ENCODE measurements at regions of chr10 and their contacts with region 1.

Region 1: GRCh38 chr10:122112625-122113160 is 123.7 kb downstream of the TACC2 start:
- DNase-seq: peak; percentile 90 to 95
- ATAC-seq: peak; percentile 78 to 80
- H3K4me3 ChIP-seq: peak overlapping the region; percentile 69 to 82 (median 74)
- H3K27ac ChIP-seq: peak overlapping the region; percentile 95 to 99 (median 98)
- H3K4me1 ChIP-seq: peaks cover 49 to 52% of the 10 kb centered on the region in 2 donors
- H3K27me3 ChIP-seq: no peaks in the 10 kb centered on the region
- CTCF ChIP-seq: peak; percentile 39 to 79 (median 60)
- POLR2A ChIP-seq: peak; percentile 80 to 88

Region 2: DNA sequence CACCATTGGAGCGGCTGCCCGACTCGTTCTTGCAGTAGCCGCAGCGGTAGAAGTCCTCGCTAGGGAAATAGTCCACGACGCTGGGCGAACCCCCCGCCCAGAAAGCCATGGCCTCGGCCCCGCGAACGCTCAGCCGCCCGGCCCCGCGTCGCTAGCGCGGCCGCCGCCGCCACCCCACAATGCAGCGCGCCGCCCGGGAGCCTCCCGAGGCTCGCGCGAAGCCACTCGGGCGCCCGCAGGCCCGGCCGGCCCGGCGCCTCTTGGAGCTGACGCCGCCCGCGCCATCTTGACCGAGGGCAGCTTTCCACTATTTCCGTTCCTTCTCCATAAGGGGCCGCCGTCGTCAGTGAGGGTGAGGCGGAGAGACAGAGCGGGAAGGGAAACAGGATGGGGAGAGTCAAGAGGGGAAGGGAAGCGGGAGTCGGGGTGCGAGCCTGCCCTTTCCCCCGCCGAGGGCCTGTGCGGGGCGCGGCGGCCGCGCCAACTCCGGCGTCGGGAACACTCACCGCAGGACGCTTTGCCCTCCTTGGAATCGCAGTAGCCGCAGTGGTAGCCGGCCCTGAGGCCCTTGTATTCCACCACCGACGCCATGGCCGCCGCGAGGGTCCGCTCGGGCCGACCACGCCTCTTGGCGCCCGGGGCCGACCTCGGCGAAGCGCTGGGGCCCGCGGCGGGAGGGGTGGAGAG is 184.7 kb before region 1 on chr10 and contains the start of gene ATE1:
- in situ Hi-C with region 1: no loop called
- intact Hi-C with region 1: loop called (anchors 1 kb)
- DNase-seq: peak; percentile 87 to 90
- ATAC-seq: peak; percentile 90
- H3K4me3 ChIP-seq: peak within 1 kb of the TSS; percentile 77 to 99 (median 86)
- H3K27ac ChIP-seq: peak within 1 kb of the TSS; percentile 90 to 99 (median 94)
- H3K4me1 ChIP-seq: peaks cover 18 to 21% of the 10 kb centered on the region in 2 donors
- H3K27me3 ChIP-seq: no peaks in the 10 kb centered on the region
- CTCF ChIP-seq: peak in 3 of 5 experiments; percentile 3 to 11 (median 6)
- POLR2A ChIP-seq: peak; percentile 69 to 84
- total RNA-seq, gene ATE1: 34.3 to 57.6 (median 39.4) TPM

Region 3: GRCh38 chr10:121974535-121975294 is 138.0 kb before region 1 on chr10 and contains the start of gene NSMCE4A:
- in situ Hi-C with region 1: no loop called
- intact Hi-C with region 1: loop called (anchors 2 kb)
- DNase-seq: peak; percentile 68 to 77
- ATAC-seq: peak; percentile 88 to 89
- H3K4me3 ChIP-seq: peak within 1 kb of the TSS; percentile 71 to 91 (median 81)
- H3K27ac ChIP-seq: peak within 1 kb of the TSS; percentile 94 to 99 (median 96)
- H3K4me1 ChIP-seq: peaks cover 16 to 19% of the 10 kb centered on the region in 2 donors
- H3K27me3 ChIP-seq: no peaks in the 10 kb centered on the region
- CTCF ChIP-seq: peak in 4 of 5 experiments; percentile 66 to 80 (median 68)
- POLR2A ChIP-seq: peak; percentile 87 to 92
- total RNA-seq, gene NSMCE4A: 20.1 to 37.7 (median 26.9) TPM

Region 4: GRCh38 chr10:121994390-121994961 is 118.2 kb before region 1 on chr10:
- in situ Hi-C with region 1: no loop called
- intact Hi-C with region 1: loop called (anchors 2 kb)
- DNase-seq: peak; percentile 89 to 96
- ATAC-seq: peak; percentile 40 to 58
- H3K4me3 ChIP-seq: peak overlapping the region; percentile 37 to 63 (median 57)
- H3K27ac ChIP-seq: peak overlapping the region; percentile 94 to 98 (median 96)
- H3K4me1 ChIP-seq: peaks cover 34 to 51% of the 10 kb centered on the region in 2 donors
- H3K27me3 ChIP-seq: no peaks in the 10 kb centered on the region
- CTCF ChIP-seq: peak in 1 of 5 experiments; percentile 15
- POLR2A ChIP-seq: peak; percentile 94 to 98

Region 5: GRCh38 chr10:122051251-122051996 is 61.3 kb before region 1 on chr10:
- in situ Hi-C with region 1: loop called (anchors 5 to 10 kb)
- intact Hi-C with region 1: loop called (anchors 1 kb)
- DNase-seq: peak in 1 of 2 donors; percentile 52
- ATAC-seq: peak; percentile 18 to 50
- H3K4me3 ChIP-seq: no peak overlapping the region
- H3K27ac ChIP-seq: peak overlapping the region; percentile 78 to 92 (median 87)
- H3K4me1 ChIP-seq: peaks cover 22 to 35% of the 10 kb centered on the region in 2 donors
- H3K27me3 ChIP-seq: no peaks in the 10 kb centered on the region
- CTCF ChIP-seq: peak; percentile 40 to 73 (median 71)
- POLR2A ChIP-seq: no peak

Region 6: DNA sequence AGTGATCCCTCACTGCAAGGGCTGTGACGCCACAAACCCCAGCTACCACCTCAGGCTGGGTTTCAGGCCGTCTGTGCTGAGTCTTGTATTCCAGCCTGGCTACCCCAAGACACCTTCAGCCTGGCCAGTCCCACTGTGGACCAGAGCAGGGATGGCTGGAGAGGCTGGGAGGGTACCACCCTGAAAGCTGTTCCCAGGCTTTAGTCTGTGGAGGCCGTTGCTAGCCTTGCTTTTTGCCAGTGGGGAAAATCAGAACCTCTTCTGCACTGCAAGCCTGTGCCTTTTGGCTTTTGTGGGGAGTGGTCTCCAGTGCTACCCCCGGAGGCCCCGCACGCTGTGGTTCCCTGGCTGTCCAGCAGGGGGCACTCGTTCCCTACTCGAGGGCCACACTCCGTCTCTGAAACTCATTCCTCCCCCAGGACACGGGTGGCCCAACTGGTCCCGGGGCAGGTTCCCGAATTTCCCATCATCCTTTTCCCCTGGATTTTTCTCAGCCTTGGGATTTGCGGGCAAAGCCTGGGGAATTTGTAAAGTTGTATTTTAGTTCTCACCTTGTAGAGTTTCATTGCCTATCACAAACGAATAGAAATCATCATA is 30.0 kb after region 1 on chr10:
- in situ Hi-C with region 1: no loop called
- intact Hi-C with region 1: loop called (anchors 2 kb)
- DNase-seq: peak in 1 of 2 donors; percentile 56
- ATAC-seq: no peak
- H3K4me3 ChIP-seq: no peak overlapping the region
- H3K27ac ChIP-seq: peak overlapping the region; percentile 85 to 98 (median 94)
- H3K4me1 ChIP-seq: peaks cover 64 to 72% of the 10 kb centered on the region in 2 donors
- H3K27me3 ChIP-seq: no peaks in the 10 kb centered on the region
- CTCF ChIP-seq: peak; percentile 93 to 98 (median 98)
- POLR2A ChIP-seq: no peak

Measured in gastrocnemius medialis (tissue), 4 donors.